Right lobe of liver (tissue), 6 donors: ENCODE measurements at regions of chr15 and their contacts with region 1.

Region 1: DNA sequence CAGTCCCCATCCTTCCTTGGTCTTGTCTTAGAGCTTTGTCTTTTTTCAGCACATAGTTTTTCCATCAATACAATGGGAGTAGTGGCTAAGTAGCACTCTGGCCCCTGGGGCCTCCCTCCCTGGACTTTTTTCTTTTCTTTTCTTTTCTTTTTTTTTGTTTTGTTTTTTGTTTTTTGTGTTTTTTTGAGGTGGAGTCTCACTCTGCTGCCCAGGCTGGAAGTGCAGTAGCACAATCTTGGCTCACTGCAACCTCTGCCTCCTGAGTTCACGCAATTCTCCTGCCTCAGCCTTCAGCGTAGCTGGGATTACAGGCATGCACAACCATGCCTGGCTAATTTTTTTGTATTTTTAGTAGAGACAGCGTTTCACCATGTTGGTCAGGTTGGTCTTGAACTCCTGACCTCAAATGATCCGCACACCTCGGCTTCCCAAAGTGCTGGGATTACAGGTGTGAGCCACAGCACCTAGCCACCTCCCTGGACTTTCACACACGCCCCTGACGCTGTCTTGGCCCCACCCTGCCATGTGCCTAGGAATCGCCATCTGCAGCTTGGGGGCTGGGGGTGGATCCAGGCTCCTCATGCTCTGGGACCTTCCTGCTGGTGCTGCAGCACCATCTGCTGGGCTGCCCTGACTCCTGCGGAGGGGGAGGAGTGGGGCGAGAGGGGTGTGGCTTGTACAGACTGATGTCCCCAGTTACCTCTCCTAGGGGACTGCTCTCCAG is 2.8 kb downstream of the C15orf39 start:
- DNase-seq: peak; percentile 92 to 94 (median 93)
- ATAC-seq: peak; percentile 78 to 86 (median 80)
- H3K4me3 ChIP-seq: no peak overlapping the region
- H3K27ac ChIP-seq: peak overlapping the region in 2 of 3 donors; percentile 4 to 95
- H3K4me1 ChIP-seq: peaks cover 0 to 22% (median 2%) of the 10 kb centered on the region in 4 donors
- H3K27me3 ChIP-seq: no peaks in the 10 kb centered on the region
- CTCF ChIP-seq: peak; percentile 95 to 97 (median 96)
- POLR2A ChIP-seq: no peak

Region 2: DNA sequence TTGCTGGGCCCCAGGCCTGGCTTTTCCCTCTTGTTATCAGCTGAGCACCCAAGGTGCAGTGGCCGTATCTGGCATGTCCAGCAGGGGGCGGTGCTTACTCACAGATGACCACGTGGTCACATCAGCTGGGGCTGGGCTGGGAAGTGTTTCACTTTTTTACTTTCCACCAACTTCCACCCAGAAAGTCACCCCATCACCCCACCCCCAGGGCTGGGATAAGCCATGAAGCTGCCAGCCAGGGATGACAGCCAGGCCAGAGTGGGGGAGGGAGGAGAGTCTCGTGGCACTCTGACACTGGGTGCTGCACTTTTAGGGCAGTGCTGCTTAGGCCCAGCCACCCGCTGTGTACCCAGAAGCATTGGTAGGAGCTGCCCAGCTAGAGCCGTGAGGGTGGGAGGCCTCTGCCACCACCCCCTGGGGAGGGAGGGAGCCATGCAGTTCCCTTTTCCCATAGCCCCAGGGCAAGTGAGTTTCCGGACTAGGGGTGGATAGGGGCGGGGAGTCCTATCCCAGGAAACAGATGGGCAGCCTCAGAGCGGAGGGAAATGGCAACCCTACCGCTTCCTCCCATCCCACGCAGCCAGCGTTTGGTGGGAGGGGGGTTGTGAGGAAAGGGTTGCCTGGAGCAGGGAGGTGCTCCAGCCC is 175.0 kb before region 1 on chr15:
- intact Hi-C with region 1: loop called (anchors 2 to 5 kb)
- DNase-seq: peak; percentile 92 to 94 (median 93)
- ATAC-seq: peak; percentile 88 to 95 (median 90)
- H3K4me3 ChIP-seq: peak overlapping the region in 1 of 3 donors; percentile 17
- H3K27ac ChIP-seq: peak overlapping the region in 2 of 3 donors; percentile 34 to 47
- H3K4me1 ChIP-seq: peaks cover 0 to 23% (median 5%) of the 10 kb centered on the region in 4 donors
- H3K27me3 ChIP-seq: no peaks in the 10 kb centered on the region
- CTCF ChIP-seq: peak; percentile 90 to 97 (median 94)
- POLR2A ChIP-seq: peak; percentile 27

Region 3: GRCh38 chr15:75104804-75105535 is 99.5 kb before region 1 on chr15:
- intact Hi-C with region 1: no loop called
- DNase-seq: peak in 1 of 3 donors; percentile 51
- ATAC-seq: peak; percentile 65 to 79 (median 69)
- H3K4me3 ChIP-seq: no peak overlapping the region
- H3K27ac ChIP-seq: peak overlapping the region in 2 of 3 donors; percentile 31 to 37
- H3K4me1 ChIP-seq: no peaks in the 10 kb centered on the region
- H3K27me3 ChIP-seq: no peaks in the 10 kb centered on the region
- CTCF ChIP-seq: no peak
- POLR2A ChIP-seq: no peak

Region 4: GRCh38 chr15:75145027-75145841 is 59.3 kb before region 1 on chr15:
- intact Hi-C with region 1: no loop called
- DNase-seq: no peak
- ATAC-seq: no peak
- H3K4me3 ChIP-seq: no peak overlapping the region
- H3K27ac ChIP-seq: no peak overlapping the region
- H3K4me1 ChIP-seq: no peaks in the 10 kb centered on the region
- H3K27me3 ChIP-seq: no peaks in the 10 kb centered on the region
- CTCF ChIP-seq: no peak
- POLR2A ChIP-seq: no peak

Region 5: GRCh38 chr15:75302318-75302717 is 97.8 kb after region 1 on chr15:
- intact Hi-C with region 1: no loop called
- DNase-seq: no peak
- ATAC-seq: no peak
- H3K4me3 ChIP-seq: no peak overlapping the region
- H3K27ac ChIP-seq: no peak overlapping the region
- H3K4me1 ChIP-seq: no peaks in the 10 kb centered on the region
- H3K27me3 ChIP-seq: no peaks in the 10 kb centered on the region
- CTCF ChIP-seq: no peak
- POLR2A ChIP-seq: no peak